Dorsolateral prefrontal cortex (tissue), 120 donors: ENCODE measurements at regions of chr3 and their contacts with region 1.

Region 1: DNA sequence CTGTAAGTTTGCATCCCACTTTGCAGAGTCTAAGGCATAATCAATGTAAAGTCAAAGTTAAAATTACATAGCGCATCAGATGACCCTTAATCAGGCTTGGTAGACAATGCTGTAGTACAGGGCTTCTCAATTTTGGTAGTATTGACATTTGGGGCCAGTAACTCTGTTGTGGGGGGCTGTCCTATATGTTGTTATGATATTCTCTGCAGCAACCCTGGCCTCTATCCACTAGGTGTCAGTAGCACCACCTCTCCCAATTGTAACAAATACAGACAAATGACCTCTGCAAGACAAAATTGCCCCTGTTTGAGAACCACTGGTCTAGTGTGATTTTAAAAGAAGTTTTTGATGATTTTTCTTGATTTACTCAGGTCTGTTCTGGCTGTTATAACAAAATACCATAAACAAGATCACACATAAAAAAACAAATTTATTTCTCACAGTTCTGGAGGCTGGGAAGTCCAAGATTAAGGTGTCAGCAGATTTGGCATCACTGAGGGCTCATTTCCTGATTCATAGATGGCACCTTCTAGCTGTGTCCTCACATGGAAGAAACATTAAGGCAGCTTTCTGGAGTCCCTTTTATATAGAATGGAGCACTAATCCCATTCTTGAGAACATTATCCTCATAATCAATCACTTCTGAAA is 37.6 kb upstream of the SLC9A9 start:
- DNase-seq: peak in 2 of 10 donors; percentile 22 to 25
- H3K4me3 ChIP-seq: no peak overlapping the region
- H3K27ac ChIP-seq: no peak overlapping the region
- H3K27me3 ChIP-seq: no peaks in the 10 kb centered on the region
- CTCF ChIP-seq: peak; percentile 32 to 79 (median 64)

Region 2: DNA sequence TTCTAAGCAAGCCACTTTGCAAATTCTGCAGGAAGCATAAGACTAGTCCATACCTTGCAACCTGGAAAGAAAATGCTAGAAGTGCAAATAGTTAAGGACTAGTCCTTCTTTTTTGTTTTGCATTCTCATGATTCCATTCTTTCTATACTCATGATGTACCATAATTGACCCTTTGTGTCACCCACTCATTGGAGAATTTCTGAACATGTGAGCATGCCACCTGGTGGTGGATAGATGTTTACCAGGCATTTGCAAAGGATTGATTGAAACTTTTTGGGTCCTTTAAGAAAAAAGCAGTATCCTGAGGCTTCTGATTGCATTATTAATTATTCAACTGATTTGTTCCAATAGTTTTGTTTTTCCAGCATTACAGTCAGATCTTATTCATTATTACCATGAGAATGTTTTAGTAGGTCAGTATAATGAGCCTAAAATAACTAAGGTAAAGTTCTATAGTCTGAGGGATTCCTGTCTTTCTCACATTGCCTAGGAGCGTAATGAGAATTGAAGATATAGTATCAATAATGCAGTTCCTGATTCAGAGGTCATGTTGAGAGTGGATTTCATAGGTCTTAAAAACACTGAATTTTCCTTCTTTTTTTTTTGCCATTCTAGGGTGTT is 65.6 kb after region 1 on chr3:
- intact Hi-C with region 1: loop called in 1 of 2 experiments (anchors 10 kb)
- DNase-seq: peak in 2 of 10 donors; percentile 4 to 22
- H3K4me3 ChIP-seq: no peak overlapping the region
- H3K27ac ChIP-seq: no peak overlapping the region
- H3K27me3 ChIP-seq: no peaks in the 10 kb centered on the region
- CTCF ChIP-seq: peak; percentile 49 to 86 (median 73)